Natural killer cell (primary cell): ENCODE measurements at regions of chr14 and their contacts with region 1.

Region 1: DNA sequence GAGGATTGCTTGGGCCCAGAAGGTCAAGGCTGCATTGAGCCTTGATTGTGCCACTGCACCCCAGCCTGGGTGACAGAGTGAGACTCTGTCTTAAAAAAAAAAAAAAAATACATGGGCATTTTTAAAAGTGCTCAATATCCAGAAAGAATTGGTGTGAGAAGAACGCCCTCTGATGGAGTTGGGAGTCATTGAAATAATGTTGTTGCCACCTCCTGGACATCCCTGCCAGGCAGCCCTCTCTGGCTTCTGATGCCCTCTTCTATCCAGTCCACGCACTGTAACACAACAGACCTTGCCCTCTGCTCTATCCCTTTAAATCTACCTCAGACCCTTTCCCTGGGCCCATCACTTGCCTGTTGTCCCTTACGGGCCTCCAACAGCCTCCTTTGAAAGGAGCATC is 4.9 kb downstream of the PTGDR start:
- DNase-seq: peak in 1 of 2 donors; percentile 73
- ATAC-seq: peak; percentile 46 to 64 (median 55)
- H3K4me3 ChIP-seq: peak overlapping the region; percentile 89
- H3K4me3 Mint-ChIP-seq: peak overlapping the region; percentile 99
- H3K27ac ChIP-seq: peak overlapping the region; percentile 71
- H3K27ac Mint-ChIP-seq: peak overlapping the region; percentile 95 to 100
- H3K4me1 ChIP-seq: peaks cover 26% of the 10 kb centered on the region
- H3K4me1 Mint-ChIP-seq: peaks cover 66 to 82% of the 10 kb centered on the region in 2 donors
- H3K27me3 ChIP-seq: no peaks in the 10 kb centered on the region
- H3K27me3 Mint-ChIP-seq: no peaks in the 10 kb centered on the region
- CTCF ChIP-seq: peak; percentile 70

Region 2: DNA sequence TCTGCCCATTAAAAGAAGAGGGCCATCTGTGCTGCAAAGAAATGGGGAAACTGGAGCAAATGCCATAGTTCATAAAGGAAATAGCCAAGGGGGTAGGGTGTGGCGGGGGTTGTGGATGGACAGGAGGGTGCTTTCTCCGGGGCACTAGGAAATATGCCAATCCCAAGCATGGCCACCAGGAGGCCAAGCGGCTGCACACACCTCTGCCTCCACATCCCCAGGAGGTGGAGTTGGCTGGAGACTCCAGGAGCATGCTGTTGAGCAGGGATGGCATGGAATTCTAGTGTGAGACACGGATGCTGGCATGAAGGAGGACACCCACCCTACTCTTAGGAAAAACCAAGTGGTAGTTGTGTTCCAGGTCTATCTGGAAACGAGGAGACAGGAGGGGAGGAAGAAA is 228.7 kb before region 1 on chr14:
- intact Hi-C with region 1: loop called (anchors 1 kb)
- DNase-seq: peak; percentile 45 to 67
- ATAC-seq: peak; percentile 68 to 84 (median 84)
- H3K4me3 ChIP-seq: no peak overlapping the region
- H3K4me3 Mint-ChIP-seq: no peak overlapping the region
- H3K27ac ChIP-seq: no peak overlapping the region
- H3K27ac Mint-ChIP-seq: no peak overlapping the region
- H3K4me1 ChIP-seq: no peaks in the 10 kb centered on the region
- H3K4me1 Mint-ChIP-seq: peaks cover 5 to 17% of the 10 kb centered on the region in 2 donors
- H3K27me3 ChIP-seq: no peaks in the 10 kb centered on the region
- H3K27me3 Mint-ChIP-seq: peaks cover 0 to 6% of the 10 kb centered on the region in 2 donors
- CTCF ChIP-seq: peak; percentile 67

Region 3: GRCh38 chr14:52146504-52146903 is 125.9 kb before region 1 on chr14:
- intact Hi-C with region 1: loop called (anchors 1 kb)
- DNase-seq: peak in 1 of 2 donors; percentile 10
- ATAC-seq: no peak
- H3K4me3 ChIP-seq: no peak overlapping the region
- H3K4me3 Mint-ChIP-seq: peak overlapping the region; percentile 45
- H3K27ac ChIP-seq: no peak overlapping the region
- H3K27ac Mint-ChIP-seq: peak overlapping the region; percentile 9 to 76
- H3K4me1 ChIP-seq: peaks cover 11% of the 10 kb centered on the region
- H3K4me1 Mint-ChIP-seq: peaks cover 49% of the 10 kb centered on the region in 2 donors
- H3K27me3 ChIP-seq: no peaks in the 10 kb centered on the region
- H3K27me3 Mint-ChIP-seq: no peaks in the 10 kb centered on the region
- CTCF ChIP-seq: no peak

Region 4: GRCh38 chr14:52244997-52245396 is 27.4 kb before region 1 on chr14:
- intact Hi-C with region 1: loop called (anchors 1 kb)
- DNase-seq: no peak
- ATAC-seq: no peak
- H3K4me3 ChIP-seq: no peak overlapping the region
- H3K4me3 Mint-ChIP-seq: no peak overlapping the region
- H3K27ac ChIP-seq: no peak overlapping the region
- H3K27ac Mint-ChIP-seq: peak overlapping the region; percentile 84 to 85
- H3K4me1 ChIP-seq: peaks cover 34% of the 10 kb centered on the region
- H3K4me1 Mint-ChIP-seq: peaks cover 69 to 75% of the 10 kb centered on the region in 2 donors
- H3K27me3 ChIP-seq: no peaks in the 10 kb centered on the region
- H3K27me3 Mint-ChIP-seq: no peaks in the 10 kb centered on the region
- CTCF ChIP-seq: no peak